Lower leg skin (tissue), 4 donors: ENCODE measurements at regions of chr1 and their contacts with region 1.

Region 1: GRCh38 chr1:26787706-26788514 is at the start of gene PIGV:
- DNase-seq: peak; percentile 82 to 97
- H3K4me3 ChIP-seq: peak within 1 kb of the TSS; percentile 69
- CTCF ChIP-seq: no peak
- POLR2A ChIP-seq: peak in 1 of 2 donors; percentile 46
- total RNA-seq, gene PIGV: 18.2 to 39.3 (median 27.1) TPM

Region 2: GRCh38 chr1:26602378-26602959 is 185.4 kb before region 1 on chr1:
- intact Hi-C with region 1: loop called (anchors 5 kb)
- DNase-seq: peak in 1 of 2 donors; percentile 61
- H3K4me3 ChIP-seq: no peak overlapping the region
- CTCF ChIP-seq: peak in 1 of 3 donors; percentile 82
- POLR2A ChIP-seq: no peak

Region 3: GRCh38 chr1:26695356-26696118 is 92.4 kb before region 1 on chr1 and contains the start of gene ARID1A:
- intact Hi-C with region 1: loop called (anchors 10 kb)
- DNase-seq: peak; percentile 94 to 99
- H3K4me3 ChIP-seq: peak within 1 kb of the TSS; percentile 83
- CTCF ChIP-seq: no peak
- POLR2A ChIP-seq: no peak
- total RNA-seq, gene ARID1A: 53.3 to 77.2 (median 54.9) TPM